Calu3 (cell line): ENCODE measurements at regions of chr2 and their contacts with region 1.

Region 1: DNA sequence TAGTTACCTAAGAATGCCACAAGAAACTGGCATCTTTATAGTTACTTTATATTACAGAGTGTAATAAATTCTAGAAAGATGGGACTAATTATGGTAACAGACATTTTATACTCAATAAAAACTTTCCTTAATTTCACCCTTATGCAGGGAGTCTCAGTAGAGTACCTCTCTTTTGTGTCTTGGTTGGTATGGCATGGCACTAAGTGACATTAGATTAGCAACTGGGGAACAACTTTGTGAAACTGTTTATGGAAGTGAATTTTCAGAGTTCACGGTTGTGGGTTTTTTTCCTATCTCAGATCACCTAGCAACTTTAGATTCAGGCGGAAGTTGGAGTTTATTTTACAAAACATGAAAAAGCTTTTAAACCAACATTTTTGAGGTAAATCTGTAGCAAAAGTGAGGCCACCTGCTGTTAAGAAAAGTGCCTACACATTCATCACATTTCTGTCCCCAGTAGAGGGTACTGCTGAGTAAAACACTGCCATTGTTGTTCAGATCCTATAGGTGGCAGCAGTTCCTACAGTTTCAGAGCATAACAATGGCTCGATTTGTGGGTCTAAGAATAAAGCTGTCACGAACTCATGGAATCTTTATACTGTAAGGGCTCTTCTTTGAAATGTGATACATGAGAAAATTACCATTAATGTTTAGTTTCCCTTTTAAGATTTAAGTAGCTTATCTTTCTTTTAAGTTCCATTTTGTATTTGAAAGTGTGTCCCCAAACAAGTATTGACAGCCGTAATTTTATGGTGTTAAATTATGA is 117.6 kb downstream of the CAMKMT start:
- DNase-seq: peak; percentile 55
- H3K4me3 Mint-ChIP-seq: no peak overlapping the region
- H3K27ac Mint-ChIP-seq: no peak overlapping the region
- H3K4me1 Mint-ChIP-seq: no peaks in the 10 kb centered on the region
- H3K27me3 Mint-ChIP-seq: no peaks in the 10 kb centered on the region
- CTCF ChIP-seq: peak; percentile 92

Region 2: DNA sequence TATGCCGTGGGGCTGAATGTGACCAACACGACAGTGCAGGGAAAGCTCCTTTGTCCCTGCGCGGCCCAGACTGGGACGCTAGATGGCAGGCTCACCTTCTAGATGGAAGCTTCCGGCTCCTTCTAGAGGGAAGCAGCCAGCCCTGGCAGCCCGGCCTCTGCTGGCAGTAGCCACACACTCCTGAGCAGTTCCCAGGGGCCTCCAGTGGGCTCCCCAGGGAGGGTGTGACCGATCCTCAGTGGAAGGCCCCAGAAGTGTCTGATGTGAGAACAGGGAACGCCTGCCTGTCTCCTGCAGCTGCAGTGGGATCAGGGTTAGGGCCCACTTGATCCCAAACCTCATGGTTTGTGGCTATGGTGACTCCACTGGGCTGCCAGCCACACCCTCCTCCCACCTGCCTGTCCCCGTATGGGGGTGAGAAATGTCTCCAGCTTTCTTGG is 435.0 kb before region 1 on chr2:
- CTCF ChIA-PET with region 1: interaction called, 10 read pairs
- intact Hi-C with region 1: loop called (anchors 1 kb)
- DNase-seq: peak; percentile 90
- H3K4me3 Mint-ChIP-seq: no peak overlapping the region
- H3K27ac Mint-ChIP-seq: no peak overlapping the region
- H3K4me1 Mint-ChIP-seq: no peaks in the 10 kb centered on the region
- H3K27me3 Mint-ChIP-seq: no peaks in the 10 kb centered on the region
- CTCF ChIP-seq: peak; percentile 86

Region 3: DNA sequence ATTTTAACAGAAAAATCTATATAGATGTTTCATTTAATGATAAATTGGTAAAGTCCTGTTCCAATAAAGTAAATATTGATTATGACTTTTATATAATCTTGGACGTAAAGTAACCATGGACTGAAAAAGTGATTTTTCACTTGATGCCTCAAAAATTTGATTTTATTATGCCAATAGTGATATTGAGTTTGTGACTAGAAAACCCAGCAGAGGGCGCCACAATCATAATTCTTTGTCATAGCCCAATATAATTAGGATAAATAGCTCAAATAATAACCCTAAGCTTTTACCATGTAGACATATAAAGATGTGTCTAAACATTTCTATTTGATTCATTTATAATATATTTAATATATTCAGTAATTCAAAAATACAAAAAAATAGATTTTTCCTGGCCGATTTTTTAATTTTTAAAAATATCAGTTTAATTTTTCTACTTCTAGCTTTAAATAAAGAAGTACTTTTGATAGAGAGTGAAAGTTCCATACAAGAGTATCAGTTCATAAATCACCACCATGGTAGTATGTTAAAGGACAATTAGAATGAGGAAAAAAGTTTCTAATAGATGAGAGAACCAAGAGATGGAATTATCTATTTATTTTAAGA is 86.9 kb before region 1 on chr2:
- CTCF ChIA-PET with region 1: interaction called, 22 read pairs
- intact Hi-C with region 1: loop called (anchors 5 kb)
- DNase-seq: peak; percentile 54
- H3K4me3 Mint-ChIP-seq: no peak overlapping the region
- H3K27ac Mint-ChIP-seq: no peak overlapping the region
- H3K4me1 Mint-ChIP-seq: peaks cover 9% of the 10 kb centered on the region
- H3K27me3 Mint-ChIP-seq: no peaks in the 10 kb centered on the region
- CTCF ChIP-seq: no peak

Region 4: GRCh38 chr2:44638649-44639048 is 159.3 kb after region 1 on chr2:
- CTCF ChIA-PET with region 1: no interaction called
- intact Hi-C with region 1: no loop called
- DNase-seq: no peak
- H3K4me3 Mint-ChIP-seq: no peak overlapping the region
- H3K27ac Mint-ChIP-seq: no peak overlapping the region
- H3K4me1 Mint-ChIP-seq: no peaks in the 10 kb centered on the region
- H3K27me3 Mint-ChIP-seq: no peaks in the 10 kb centered on the region
- CTCF ChIP-seq: no peak

Region 5: GRCh38 chr2:44715671-44716081 is 236.4 kb after region 1 on chr2:
- CTCF ChIA-PET with region 1: interaction called, 14 read pairs
- intact Hi-C with region 1: loop called (anchors 10 kb)
- DNase-seq: peak; percentile 1
- H3K4me3 Mint-ChIP-seq: no peak overlapping the region
- H3K27ac Mint-ChIP-seq: no peak overlapping the region
- H3K4me1 Mint-ChIP-seq: no peaks in the 10 kb centered on the region
- H3K27me3 Mint-ChIP-seq: no peaks in the 10 kb centered on the region
- CTCF ChIP-seq: no peak